Ascending aorta (tissue), 2 donors: ENCODE measurements at regions of chr14 and their contacts with region 1.

Region 1: GRCh38 chr14:67816326-67817002 is at the start of gene ZFYVE26:
- DNase-seq: peak; percentile 86 to 96
- H3K4me3 ChIP-seq: peak within 1 kb of the TSS; percentile 69 to 73
- H3K27ac ChIP-seq: peak within 1 kb of the TSS; percentile 41 to 76
- H3K4me1 ChIP-seq: peaks cover 0 to 7% of the 10 kb centered on the region in 2 donors
- H3K27me3 ChIP-seq: no peaks in the 10 kb centered on the region
- CTCF ChIP-seq: no peak
- total RNA-seq, gene ZFYVE26: 19.3 TPM

Region 2: GRCh38 chr14:67718265-67718664 is 98.2 kb before region 1 on chr14:
- intact Hi-C with region 1: no loop called
- DNase-seq: no peak
- H3K4me3 ChIP-seq: no peak overlapping the region
- H3K27ac ChIP-seq: no peak overlapping the region
- H3K4me1 ChIP-seq: peaks cover 0 to 2% of the 10 kb centered on the region in 2 donors
- H3K27me3 ChIP-seq: no peaks in the 10 kb centered on the region
- CTCF ChIP-seq: no peak

Region 3: DNA sequence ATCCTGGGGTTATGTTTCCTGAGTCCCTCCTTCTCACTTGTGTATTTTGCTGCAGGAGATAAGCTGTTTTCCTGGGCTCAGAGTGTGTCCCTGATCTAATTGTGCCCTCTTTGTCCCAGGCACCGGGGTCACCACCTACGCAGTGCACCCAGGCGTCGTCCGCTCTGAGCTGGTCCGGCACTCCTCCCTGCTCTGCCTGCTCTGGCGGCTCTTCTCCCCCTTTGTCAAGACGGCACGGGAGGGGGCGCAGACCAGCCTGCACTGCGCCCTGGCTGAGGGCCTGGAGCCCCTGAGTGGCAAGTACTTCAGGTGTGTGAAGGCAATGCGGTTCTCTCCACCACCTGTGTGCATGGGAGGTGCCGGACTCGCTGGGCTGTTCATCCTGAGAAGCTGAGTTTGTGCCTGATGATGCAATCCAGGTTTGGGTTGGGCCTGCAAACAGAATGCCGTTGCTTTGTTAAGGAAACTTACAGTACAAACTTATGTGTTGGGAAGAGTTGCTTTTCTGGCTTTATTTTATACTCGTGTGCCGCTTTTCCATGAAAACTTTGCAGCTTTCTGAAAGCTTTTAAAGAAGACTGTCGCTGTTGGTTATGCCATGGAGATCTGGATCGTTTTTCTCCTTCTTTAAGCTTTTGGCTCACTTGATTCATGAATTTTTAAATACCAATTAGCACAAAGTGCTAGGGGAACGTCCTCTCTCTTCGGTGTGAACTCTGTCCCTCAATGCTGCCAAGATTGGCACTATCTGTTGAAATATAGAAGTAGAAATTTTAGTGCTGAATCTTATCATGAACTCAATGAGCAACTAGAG is 87.2 kb before region 1 on chr14:
- intact Hi-C with region 1: no loop called
- DNase-seq: no peak
- H3K4me3 ChIP-seq: no peak overlapping the region
- H3K27ac ChIP-seq: no peak overlapping the region
- H3K4me1 ChIP-seq: no peaks in the 10 kb centered on the region
- H3K27me3 ChIP-seq: no peaks in the 10 kb centered on the region
- CTCF ChIP-seq: no peak

Region 4: DNA sequence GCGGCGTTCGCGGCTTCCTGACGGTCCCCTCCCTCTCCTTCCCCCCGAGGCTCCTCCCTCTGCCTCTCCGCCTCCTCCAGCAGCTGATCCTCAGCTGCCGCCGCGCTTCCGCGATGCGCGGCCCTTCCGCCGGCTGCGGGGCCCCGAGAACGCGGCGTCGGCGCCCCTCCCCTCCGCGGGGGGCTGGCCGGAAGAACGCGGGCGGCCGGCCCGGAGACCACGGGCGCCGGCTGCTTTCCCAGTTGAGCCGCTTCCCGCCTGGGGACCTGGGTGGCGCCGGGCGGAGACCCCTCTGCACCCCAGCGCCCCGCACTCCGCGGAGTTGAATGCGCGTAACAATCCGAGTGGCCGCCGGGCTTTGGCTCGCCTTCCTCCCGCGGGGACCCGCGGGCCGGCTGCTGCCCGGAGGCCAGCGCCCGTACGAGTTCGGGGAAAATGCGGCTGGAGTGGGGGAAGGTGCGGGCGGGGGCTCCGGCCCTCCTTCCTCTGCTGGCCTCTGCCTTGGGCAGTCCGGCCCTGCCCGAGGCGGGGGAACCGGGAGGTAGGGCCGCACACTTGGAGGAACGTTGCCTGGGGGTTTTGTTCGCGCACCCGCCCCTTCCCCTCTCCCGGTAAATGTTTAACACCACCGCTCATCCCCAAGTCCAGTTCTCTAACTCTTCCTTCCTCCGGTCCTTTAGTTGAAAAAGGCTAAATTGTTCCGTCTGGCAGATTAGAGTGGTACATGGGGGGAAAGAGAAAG is 1336.8 kb after region 1 on chr14:
- intact Hi-C with region 1: loop called (anchors 10 kb)
- DNase-seq: peak; percentile 65 to 97
- H3K4me3 ChIP-seq: peak overlapping the region; percentile 78 to 92
- H3K27ac ChIP-seq: peak overlapping the region; percentile 97 to 98
- H3K4me1 ChIP-seq: peaks cover 0 to 6% of the 10 kb centered on the region in 2 donors
- H3K27me3 ChIP-seq: no peaks in the 10 kb centered on the region
- CTCF ChIP-seq: peak in 1 of 3 experiments; percentile 27

Region 5: DNA sequence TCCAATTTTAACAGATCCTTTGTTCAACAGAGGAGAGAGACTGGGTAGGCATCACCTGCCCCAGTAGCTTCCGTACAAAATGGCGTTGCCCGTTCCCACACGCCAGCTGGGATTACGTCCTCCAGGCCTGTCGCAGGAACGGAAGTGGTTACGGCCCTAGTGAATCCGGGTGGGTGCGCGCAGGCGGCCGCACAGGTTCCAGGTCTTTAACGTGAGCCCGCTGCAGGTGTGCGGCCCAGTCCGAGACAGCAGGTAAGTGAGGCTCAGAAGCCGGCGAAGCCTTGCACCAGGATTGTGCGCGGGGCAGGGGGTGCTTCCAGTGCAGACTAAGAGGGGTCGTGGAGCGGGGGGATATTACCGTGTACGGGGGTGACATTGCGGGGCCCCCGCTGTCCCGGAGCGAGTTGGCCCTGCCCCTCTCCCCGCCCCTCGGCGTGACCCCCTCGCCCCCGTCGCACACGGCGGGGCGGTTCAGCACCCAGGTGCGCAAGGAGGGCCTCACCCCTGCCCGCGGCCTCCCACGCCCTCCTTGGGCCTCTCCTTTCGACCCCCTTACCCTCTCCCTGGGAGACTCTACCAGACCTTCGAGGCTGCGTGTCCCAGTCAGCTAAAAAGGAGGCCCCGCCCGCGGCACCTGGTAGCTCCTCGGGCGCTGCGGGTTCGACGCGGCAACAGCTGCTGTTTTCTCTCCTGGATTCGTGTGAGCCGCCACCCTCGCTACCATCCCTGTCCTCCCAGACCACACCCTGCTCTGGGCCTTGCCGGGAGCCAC is 1375.1 kb after region 1 on chr14 and contains the start of gene EXD2:
- intact Hi-C with region 1: loop called (anchors 5 kb)
- DNase-seq: peak; percentile 24 to 90
- H3K4me3 ChIP-seq: peak within 1 kb of the TSS; percentile 73 to 92
- H3K27ac ChIP-seq: peak within 1 kb of the TSS; percentile 37 to 39
- H3K4me1 ChIP-seq: no peaks in the 10 kb centered on the region
- H3K27me3 ChIP-seq: no peaks in the 10 kb centered on the region
- CTCF ChIP-seq: no peak
- total RNA-seq, gene EXD2: 17.2 TPM

Region 6: DNA sequence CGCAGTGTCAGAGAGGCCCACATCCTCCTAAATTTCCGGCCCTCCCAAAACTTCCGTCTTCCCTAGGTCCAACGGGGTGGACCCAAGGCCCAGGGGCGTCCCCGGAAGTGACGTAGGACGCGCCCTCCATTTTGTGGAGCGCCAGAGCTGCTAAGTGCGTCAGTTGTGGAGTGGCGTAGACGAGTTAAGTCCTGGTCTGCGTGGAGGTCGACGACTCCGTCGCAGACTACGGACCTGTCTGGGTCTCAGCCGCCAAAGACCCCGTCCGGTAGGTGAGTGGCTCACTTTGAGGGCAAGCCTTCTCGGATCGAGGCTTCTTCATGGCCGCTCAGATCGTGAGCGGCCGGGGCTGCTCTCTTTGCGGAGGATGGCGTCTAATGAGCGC is 1950.5 kb after region 1 on chr14 and contains the start of gene SRSF5:
- intact Hi-C with region 1: loop called (anchors 5 kb)
- DNase-seq: peak; percentile 84 to 98
- H3K4me3 ChIP-seq: peak within 1 kb of the TSS; percentile 91 to 99
- H3K27ac ChIP-seq: peak within 1 kb of the TSS; percentile 100
- H3K4me1 ChIP-seq: peaks cover 19 to 32% of the 10 kb centered on the region in 2 donors
- H3K27me3 ChIP-seq: no peaks in the 10 kb centered on the region
- CTCF ChIP-seq: no peak
- total RNA-seq, gene SRSF5: 113 TPM